ENCODE measurements at regions of chr13 and their contacts with region 1.

Region 1: GRCh38 chr13:40589285-40590109 is 76.9 kb downstream of the FOXO1 start:
- DNase-seq: peak in 1 of 2 donors; percentile 70
- ATAC-seq: peak; percentile 80 to 92 (median 86)
- H3K4me3 ChIP-seq: peak overlapping the region in 1 of 10 donors; percentile 7
- H3K27ac ChIP-seq: peak overlapping the region; percentile 55 to 91 (median 68)
- H3K4me1 ChIP-seq: peaks cover 17 to 96% (median 75%) of the 10 kb centered on the region in 9 donors
- H3K27me3 ChIP-seq: no peaks in the 10 kb centered on the region
- CTCF ChIP-seq: no peak

Region 2: GRCh38 chr13:39631307-39631706 is 958.2 kb before region 1 on chr13:
- intact Hi-C with region 1: no loop called
- DNase-seq: no peak
- ATAC-seq: no peak
- H3K4me3 ChIP-seq: no peak overlapping the region
- H3K27ac ChIP-seq: no peak overlapping the region
- H3K4me1 ChIP-seq: no peaks in the 10 kb centered on the region
- H3K27me3 ChIP-seq: peaks cover 0 to 2% (median 0%) of the 10 kb centered on the region in 7 donors
- CTCF ChIP-seq: no peak

Region 3: GRCh38 chr13:40477623-40478608 is 111.6 kb before region 1 on chr13:
- intact Hi-C with region 1: loop called in 1 of 10 experiments (anchors 10 kb)
- DNase-seq: peak; percentile 61 to 69
- ATAC-seq: peak; percentile 48 to 83 (median 78)
- H3K4me3 ChIP-seq: peak overlapping the region in 1 of 10 donors; percentile 6
- H3K27ac ChIP-seq: peak overlapping the region; percentile 39 to 85 (median 58)
- H3K4me1 ChIP-seq: peaks cover 17 to 55% (median 45%) of the 10 kb centered on the region in 9 donors
- H3K27me3 ChIP-seq: no peaks in the 10 kb centered on the region
- CTCF ChIP-seq: no peak

Region 4: GRCh38 chr13:40653527-40654318 is 64.2 kb after region 1 on chr13:
- intact Hi-C with region 1: loop called in 1 of 10 experiments (anchors 10 kb)
- DNase-seq: no peak
- ATAC-seq: no peak
- H3K4me3 ChIP-seq: no peak overlapping the region
- H3K27ac ChIP-seq: peak overlapping the region in 2 of 10 donors; percentile 17 to 42
- H3K4me1 ChIP-seq: peaks cover 9 to 87% (median 64%) of the 10 kb centered on the region in 9 donors
- H3K27me3 ChIP-seq: no peaks in the 10 kb centered on the region
- CTCF ChIP-seq: no peak

Measured in heart right ventricle (tissue), 16 donors.